ENCODE measurements at regions of chr6 and their contacts with region 1.

Region 1: GRCh38 chr6:98325366-98325765 is 509.0 kb upstream of the POU3F2 start:
- DNase-seq: no peak
- H3K4me3 ChIP-seq: no peak overlapping the region
- CTCF ChIP-seq: no peak
- POLR2A ChIP-seq: no peak

Region 2: DNA sequence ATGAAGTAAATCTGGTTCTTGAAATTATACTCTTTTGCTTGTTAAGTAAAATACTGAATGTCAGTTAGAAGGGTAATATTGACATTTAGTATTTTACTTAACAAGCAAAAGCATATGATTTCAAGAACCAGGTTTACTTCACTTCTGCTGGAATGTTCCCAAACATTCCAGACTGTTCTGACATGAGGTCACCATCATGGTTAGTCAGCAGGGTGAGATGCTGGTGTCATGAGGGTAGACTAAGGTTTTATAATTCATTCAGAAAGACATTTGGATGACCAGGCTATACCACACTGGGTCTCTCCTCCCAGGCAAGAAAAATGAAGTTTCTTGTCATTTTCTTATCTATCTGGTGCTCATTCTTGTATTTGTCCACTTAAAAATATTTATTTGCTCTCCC is 627.9 kb before region 1 on chr6:
- intact Hi-C with region 1: no loop called
- DNase-seq: no peak
- H3K4me3 ChIP-seq: no peak overlapping the region
- CTCF ChIP-seq: no peak
- POLR2A ChIP-seq: no peak

Region 3: DNA sequence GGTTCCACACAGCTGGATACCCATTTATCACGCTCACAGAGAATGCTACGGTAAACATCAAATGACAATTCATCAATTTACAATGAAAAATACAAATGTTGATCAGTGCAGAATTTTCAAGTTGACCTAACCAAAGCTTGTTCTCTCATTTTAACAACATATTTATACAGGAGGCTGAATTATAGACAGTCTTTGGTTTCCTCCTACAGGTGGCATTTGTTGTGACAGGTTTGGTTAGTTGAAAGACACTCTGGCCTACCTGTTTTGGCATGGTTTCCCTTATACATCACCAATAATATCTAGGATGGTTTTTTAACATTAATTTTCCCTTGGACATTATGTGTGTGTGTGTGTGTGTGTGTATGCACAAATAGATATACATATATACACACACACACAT is 399.9 kb before region 1 on chr6:
- intact Hi-C with region 1: loop called (anchors 5 kb)
- DNase-seq: no peak
- H3K4me3 ChIP-seq: no peak overlapping the region
- CTCF ChIP-seq: no peak
- POLR2A ChIP-seq: no peak